ENCODE measurements at regions of chr17 and their contacts with region 1.

Region 1: GRCh38 chr17:52170963-52171572 is 12.6 kb upstream of the CA10 start:
- DNase-seq: peak; percentile 79
- H3K4me3 Mint-ChIP-seq: no peak overlapping the region
- H3K27ac Mint-ChIP-seq: peak overlapping the region; percentile 17
- H3K4me1 Mint-ChIP-seq: peaks cover 10% of the 10 kb centered on the region
- H3K27me3 Mint-ChIP-seq: no peaks in the 10 kb centered on the region
- CTCF ChIP-seq: peak; percentile 81

Region 2: GRCh38 chr17:51860954-51861561 is 310.0 kb before region 1 on chr17:
- CTCF ChIA-PET with region 1: interaction called, 3 read pairs
- intact Hi-C with region 1: loop called (anchors 5 kb)
- DNase-seq: peak; percentile 82
- H3K4me3 Mint-ChIP-seq: no peak overlapping the region
- H3K27ac Mint-ChIP-seq: no peak overlapping the region
- H3K4me1 Mint-ChIP-seq: no peaks in the 10 kb centered on the region
- H3K27me3 Mint-ChIP-seq: peaks cover 90% of the 10 kb centered on the region
- CTCF ChIP-seq: peak; percentile 89

Region 3: GRCh38 chr17:51982189-51982588 is 188.9 kb before region 1 on chr17:
- CTCF ChIA-PET with region 1: no interaction called
- intact Hi-C with region 1: loop called (anchors 10 kb)
- DNase-seq: no peak
- H3K4me3 Mint-ChIP-seq: no peak overlapping the region
- H3K27ac Mint-ChIP-seq: no peak overlapping the region
- H3K4me1 Mint-ChIP-seq: no peaks in the 10 kb centered on the region
- H3K27me3 Mint-ChIP-seq: peaks cover 53% of the 10 kb centered on the region
- CTCF ChIP-seq: no peak

Region 4: DNA sequence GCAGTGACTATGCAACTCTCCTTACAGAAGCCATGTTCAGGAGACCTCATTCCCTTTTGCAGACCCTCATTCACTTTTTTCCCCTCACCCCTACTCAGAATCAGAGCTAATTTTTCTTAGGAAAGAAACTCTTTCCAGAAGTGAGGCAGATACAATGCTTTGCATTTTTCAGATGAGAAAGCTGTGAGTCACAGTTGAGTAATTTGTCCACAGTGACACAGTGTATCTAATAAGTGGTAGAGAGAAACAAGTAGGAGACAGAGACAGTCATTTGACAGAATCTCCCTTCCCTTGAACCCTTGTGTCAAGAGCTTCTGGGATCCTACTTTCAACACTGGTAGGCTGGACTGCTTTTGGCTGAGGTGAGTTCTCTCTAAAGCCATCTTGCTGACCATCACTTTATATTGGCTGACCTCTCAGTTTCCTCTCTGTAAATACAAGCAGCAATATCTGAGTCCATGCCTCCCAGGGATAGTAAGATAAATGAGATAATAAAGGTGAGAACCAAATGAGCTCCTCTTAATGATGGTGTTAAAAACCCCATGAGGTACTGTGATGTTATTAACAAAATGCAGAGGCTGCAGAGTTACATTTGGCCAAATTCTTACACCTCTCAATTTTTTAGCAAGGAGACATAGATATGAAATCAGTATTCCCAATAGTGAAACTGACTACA is 143.3 kb before region 1 on chr17:
- CTCF ChIA-PET with region 1: no interaction called
- intact Hi-C with region 1: no loop called
- DNase-seq: no peak
- H3K4me3 Mint-ChIP-seq: no peak overlapping the region
- H3K27ac Mint-ChIP-seq: peak overlapping the region; percentile 61
- H3K4me1 Mint-ChIP-seq: peaks cover 24% of the 10 kb centered on the region
- H3K27me3 Mint-ChIP-seq: no peaks in the 10 kb centered on the region
- CTCF ChIP-seq: no peak

Region 5: DNA sequence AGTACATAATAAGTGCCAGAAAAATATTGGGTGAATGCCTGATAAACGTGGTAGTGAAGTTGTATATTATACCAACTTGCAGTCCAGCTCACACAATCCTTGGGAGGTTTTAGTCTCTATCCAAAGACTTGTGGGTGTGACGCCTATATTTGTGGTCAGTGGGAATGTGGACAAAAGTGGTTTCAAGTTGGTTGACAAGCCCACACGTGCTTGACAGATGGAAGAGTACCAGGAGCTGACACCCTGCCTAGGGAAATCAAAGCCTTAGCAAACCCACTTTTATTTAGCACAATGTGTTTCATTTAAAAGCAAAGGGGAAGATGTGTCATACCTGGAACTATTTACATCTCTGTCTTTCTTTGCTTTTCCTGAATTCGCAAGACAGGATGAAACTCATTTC is 91.6 kb before region 1 on chr17:
- CTCF ChIA-PET with region 1: no interaction called
- intact Hi-C with region 1: no loop called
- DNase-seq: no peak
- H3K4me3 Mint-ChIP-seq: no peak overlapping the region
- H3K27ac Mint-ChIP-seq: no peak overlapping the region
- H3K4me1 Mint-ChIP-seq: no peaks in the 10 kb centered on the region
- H3K27me3 Mint-ChIP-seq: peaks cover 26% of the 10 kb centered on the region
- CTCF ChIP-seq: no peak

Region 6: DNA sequence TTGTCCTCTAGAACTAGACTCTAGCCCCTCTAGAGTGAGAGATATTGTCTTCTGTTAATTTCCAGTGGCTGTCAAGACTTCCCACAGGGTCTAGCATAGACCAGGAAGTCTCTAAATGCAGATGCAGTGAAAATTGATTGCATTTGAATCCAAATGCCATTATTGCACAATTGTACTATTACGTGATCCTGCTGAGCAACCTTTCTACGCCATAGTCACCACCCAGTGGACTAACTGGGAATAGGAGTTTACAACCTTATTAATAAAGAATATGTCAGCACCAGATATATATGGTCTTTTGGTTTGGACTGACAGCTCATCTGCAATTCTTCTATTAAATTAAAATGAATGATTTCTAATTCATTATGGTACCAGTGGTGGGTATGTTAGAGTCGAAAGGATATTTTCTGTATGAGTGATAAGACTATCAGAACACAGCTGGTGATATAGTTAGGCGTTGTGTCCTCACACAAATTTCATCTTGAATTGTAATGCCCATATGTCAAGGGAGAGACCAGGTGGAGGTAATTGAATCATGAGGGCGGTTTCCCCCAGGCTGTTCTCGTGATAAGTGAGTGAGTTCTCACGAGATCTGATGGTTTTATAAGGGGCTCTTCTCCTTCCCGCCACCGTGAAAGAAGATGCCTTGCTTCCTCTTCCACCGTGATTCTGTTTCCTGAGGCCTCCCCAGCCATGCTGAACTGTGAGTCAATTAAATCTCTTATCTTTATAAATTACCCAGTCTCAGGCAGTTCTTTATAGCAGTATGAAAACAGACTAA is 126.4 kb after region 1 on chr17:
- CTCF ChIA-PET with region 1: interaction called, 11 read pairs
- intact Hi-C with region 1: loop called (anchors 2 kb)
- DNase-seq: peak; percentile 57
- H3K4me3 Mint-ChIP-seq: no peak overlapping the region
- H3K27ac Mint-ChIP-seq: no peak overlapping the region
- H3K4me1 Mint-ChIP-seq: peaks cover 24% of the 10 kb centered on the region
- H3K27me3 Mint-ChIP-seq: no peaks in the 10 kb centered on the region
- CTCF ChIP-seq: peak; percentile 61